Dendritic cell treated with granulocyte-macrophage colony-stimulating factor and Interleukin-4, amounts not matched to agents 40 ng/mL and 50 ng/mL, for 4 days (primary cell): ENCODE measurements at regions of chr20 and their contacts with region 1.

Region 1: DNA sequence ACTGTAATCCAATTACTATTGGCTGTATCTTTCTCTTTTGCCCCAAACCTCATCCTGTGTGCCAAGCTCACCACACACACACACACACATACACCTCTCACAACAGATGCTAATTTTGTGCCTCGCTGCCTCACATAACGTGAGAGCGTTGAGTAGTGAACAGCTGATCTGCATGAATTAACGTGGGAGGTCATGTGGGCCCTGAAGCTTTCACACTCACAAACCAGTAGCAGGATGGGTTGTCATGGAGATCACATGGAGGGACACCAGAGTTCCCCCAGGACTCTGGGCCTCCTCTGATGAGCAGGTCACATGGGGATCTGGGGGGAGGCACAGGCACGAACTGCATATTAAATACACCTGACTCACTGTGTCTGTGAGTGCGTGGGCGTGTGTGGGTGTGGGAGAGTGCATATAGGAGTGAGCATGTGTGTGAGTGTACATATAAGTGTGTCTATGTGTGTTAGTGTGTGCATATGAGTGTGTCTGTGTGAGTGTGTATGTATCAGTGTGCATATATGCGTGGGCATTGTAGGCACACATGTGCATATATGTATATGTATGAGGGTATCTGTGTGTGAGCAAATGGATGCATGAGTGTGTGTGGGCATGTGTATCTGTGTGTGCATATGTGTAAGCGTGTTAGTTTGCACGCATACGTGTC is 62.7 kb upstream of the SULF2 start:
- H3K4me3 Mint-ChIP-seq: no peak overlapping the region
- H3K27ac Mint-ChIP-seq: no peak overlapping the region
- H3K4me1 Mint-ChIP-seq: peaks cover 25% of the 10 kb centered on the region
- H3K27me3 Mint-ChIP-seq: peaks cover 47% of the 10 kb centered on the region

Region 2: DNA sequence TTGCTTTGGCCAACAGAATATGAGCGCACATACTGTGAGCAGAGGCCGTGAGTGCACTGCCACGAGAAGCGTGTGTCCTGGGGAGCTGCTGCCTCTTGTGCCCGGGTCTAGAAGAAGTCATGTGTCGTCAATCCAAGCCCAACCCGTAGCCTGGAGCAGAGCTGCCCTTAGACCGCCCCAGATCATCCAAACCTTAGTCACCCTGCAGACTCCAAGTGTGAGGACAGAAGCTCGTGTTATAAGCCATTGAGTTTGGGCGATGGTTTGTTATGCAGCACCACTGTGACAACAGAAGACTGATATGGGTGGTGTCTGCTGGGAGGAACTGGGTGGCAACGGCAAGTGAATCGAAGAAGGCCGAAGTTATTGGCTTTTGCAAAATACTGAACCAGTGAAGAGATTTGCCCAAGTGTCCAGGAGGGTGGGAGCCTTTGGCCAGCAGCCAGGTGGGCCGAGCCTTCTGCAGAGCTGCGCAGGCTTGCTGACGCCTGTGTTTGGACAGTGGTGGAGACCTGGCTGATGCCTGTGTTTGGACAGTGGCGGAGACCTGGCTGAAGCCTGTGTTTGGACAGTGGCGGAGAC is 38.6 kb after region 1 on chr20:
- intact Hi-C with region 1: loop called (anchors 10 kb)
- H3K4me3 Mint-ChIP-seq: no peak overlapping the region
- H3K27ac Mint-ChIP-seq: no peak overlapping the region
- H3K4me1 Mint-ChIP-seq: no peaks in the 10 kb centered on the region
- H3K27me3 Mint-ChIP-seq: peaks cover 2% of the 10 kb centered on the region

Region 3: GRCh38 chr20:48012197-48013085 is 164.4 kb after region 1 on chr20:
- intact Hi-C with region 1: no loop called
- H3K4me3 Mint-ChIP-seq: no peak overlapping the region
- H3K27ac Mint-ChIP-seq: no peak overlapping the region
- H3K4me1 Mint-ChIP-seq: peaks cover 2% of the 10 kb centered on the region
- H3K27me3 Mint-ChIP-seq: peaks cover 17% of the 10 kb centered on the region